ENCODE measurements at regions of chr11 and their contacts with region 1.

Region 1: DNA sequence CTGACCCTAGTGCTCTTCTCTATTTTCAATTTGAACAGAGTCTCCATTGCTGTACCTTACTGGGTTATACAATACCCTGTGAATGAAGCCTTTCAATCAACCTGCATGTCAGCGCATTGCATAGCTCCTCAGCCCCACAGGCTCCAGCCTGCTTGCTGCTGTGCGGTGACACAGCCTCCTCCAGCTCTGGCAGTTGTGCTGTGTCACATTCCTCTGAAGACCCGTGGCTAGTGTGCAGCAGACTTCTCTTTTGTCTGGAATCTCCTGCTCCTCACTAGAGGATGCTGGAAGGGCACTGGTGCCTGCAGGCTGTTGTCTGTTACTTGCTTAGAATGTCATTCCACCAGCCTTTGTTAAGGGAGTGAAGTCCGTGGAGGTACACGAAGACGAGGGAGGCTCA is 390.1 kb upstream of the B3GAT1 start:
- DNase-seq: peak in 2 of 10 donors; percentile 79

Region 2: DNA sequence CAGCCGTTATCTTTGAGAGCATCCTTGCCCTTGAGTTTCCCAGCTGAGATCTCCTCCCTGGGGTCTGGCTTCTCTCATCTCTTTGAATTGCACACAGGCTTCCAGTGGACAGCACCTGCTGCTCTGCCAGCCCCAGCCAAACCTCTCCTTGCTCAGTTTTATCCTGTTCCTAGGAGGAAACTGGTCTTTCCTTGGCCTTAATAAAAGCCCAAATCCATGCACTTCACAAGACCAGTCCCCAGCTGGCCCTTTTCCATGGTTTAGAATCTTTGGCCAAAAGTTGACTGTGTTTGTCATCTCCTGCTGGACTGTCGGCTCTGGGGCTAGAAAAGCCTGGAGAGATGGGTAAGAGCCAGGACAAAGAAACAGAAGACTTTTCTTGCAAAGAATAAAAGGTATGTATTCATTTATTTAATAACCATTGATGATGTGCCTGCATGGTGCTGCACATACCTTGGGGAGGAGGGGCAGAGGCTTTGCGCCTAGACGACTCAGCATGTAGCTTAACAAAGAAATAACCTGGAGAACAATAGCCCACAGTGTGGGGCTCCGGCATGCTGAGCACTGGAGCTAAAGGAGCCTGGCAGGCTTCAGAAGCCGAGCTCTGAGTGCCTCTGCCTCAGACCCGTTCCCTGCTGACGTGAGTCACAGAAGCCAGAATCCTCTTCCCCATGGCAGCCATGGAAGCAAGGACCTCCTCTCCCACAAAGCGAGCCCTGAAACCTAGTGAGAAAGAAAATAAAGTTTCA is 70.7 kb before region 1 on chr11:
- intact Hi-C with region 1: loop called (anchors 10 kb)
- DNase-seq: no peak

Measured in posterior cingulate gyrus (tissue), 11 donors.